ENCODE measurements at regions of chr19 and their contacts with region 1.

Region 1: GRCh38 chr19:54096617-54097129 is 3.9 kb downstream of the OSCAR start:
- H3K4me3 Mint-ChIP-seq: peak overlapping the region; percentile 83
- H3K27ac Mint-ChIP-seq: peak overlapping the region; percentile 76
- H3K4me1 Mint-ChIP-seq: peaks cover 65% of the 10 kb centered on the region
- H3K27me3 Mint-ChIP-seq: peaks cover 2% of the 10 kb centered on the region

Region 2: DNA sequence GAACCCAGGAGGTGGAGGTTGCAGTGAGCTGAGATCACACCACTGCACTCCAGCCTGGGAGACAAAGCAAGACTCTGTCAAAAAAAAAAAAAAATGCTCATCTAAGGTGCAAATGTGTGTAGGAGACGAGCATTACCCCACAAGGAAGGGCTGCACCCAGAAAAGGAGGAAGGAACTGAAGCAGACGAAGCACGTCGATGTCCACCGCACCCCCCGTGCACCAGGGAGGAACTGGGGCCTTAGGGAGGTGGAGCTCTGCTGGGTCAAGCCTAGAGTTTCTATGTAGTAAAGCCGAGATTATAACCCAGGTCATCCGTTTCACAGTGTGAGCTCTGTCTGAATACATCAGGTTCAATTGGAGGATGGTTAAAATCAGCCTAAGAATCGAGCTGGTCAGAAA is 34.0 kb before region 1 on chr19:
- intact Hi-C with region 1: loop called (anchors 5 kb)
- H3K4me3 Mint-ChIP-seq: peak overlapping the region; percentile 4
- H3K27ac Mint-ChIP-seq: no peak overlapping the region
- H3K4me1 Mint-ChIP-seq: peaks cover 40% of the 10 kb centered on the region
- H3K27me3 Mint-ChIP-seq: no peaks in the 10 kb centered on the region

Region 3: GRCh38 chr19:54121259-54121658 is 24.6 kb after region 1 on chr19:
- intact Hi-C with region 1: no loop called
- H3K4me3 Mint-ChIP-seq: no peak overlapping the region
- H3K27ac Mint-ChIP-seq: no peak overlapping the region
- H3K4me1 Mint-ChIP-seq: peaks cover 14% of the 10 kb centered on the region
- H3K27me3 Mint-ChIP-seq: no peaks in the 10 kb centered on the region

Measured in dendritic cell treated with granulocyte-macrophage colony-stimulating factor and Interleukin-4, amounts not matched to agents 40 ng/mL and 50 ng/mL, for 4 days (primary cell).